ENCODE measurements at regions of chr1 and their contacts with region 1.

Region 1: GRCh38 chr1:197399755-197400527 is 131.9 kb downstream of the CRB1 start:
- DNase-seq: peak; percentile 50 to 52
- H3K4me3 ChIP-seq: no peak overlapping the region
- H3K4me3 Mint-ChIP-seq: no peak overlapping the region
- H3K27ac Mint-ChIP-seq: no peak overlapping the region
- H3K4me1 ChIP-seq: no peaks in the 10 kb centered on the region
- H3K4me1 Mint-ChIP-seq: no peaks in the 10 kb centered on the region
- H3K27me3 ChIP-seq: no peaks in the 10 kb centered on the region
- H3K27me3 Mint-ChIP-seq: peaks cover 7% of the 10 kb centered on the region
- CTCF ChIP-seq: peak; percentile 33 to 58

Region 2: GRCh38 chr1:197210426-197210825 is 189.5 kb before region 1 on chr1:
- CTCF ChIA-PET with region 1: no interaction called
- POLR2A ChIA-PET with region 1: no interaction called
- intact Hi-C with region 1: no loop called
- DNase-seq: no peak
- H3K4me3 ChIP-seq: no peak overlapping the region
- H3K4me3 Mint-ChIP-seq: no peak overlapping the region
- H3K27ac Mint-ChIP-seq: no peak overlapping the region
- H3K4me1 ChIP-seq: no peaks in the 10 kb centered on the region
- H3K4me1 Mint-ChIP-seq: no peaks in the 10 kb centered on the region
- H3K27me3 ChIP-seq: no peaks in the 10 kb centered on the region
- H3K27me3 Mint-ChIP-seq: peaks cover 7% of the 10 kb centered on the region
- CTCF ChIP-seq: no peak

Region 3: DNA sequence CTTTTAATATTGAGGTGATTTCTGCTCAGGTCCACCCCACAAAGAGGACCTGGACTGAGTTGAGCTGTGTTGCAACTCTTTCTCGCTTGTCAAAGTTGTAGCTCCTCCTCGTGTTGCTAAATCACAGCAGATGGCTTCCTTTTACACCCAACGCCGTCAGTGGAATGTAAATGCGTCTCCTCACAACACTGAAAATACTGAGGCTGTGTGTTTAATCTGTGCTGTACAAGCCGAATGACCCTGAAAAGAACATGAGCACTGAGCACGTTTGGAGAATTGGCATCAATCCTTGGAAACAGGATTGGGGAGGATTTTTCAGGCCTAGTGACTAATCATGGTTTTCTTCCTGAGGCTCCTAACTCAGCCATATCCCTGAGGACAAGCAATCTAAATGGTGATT is 64.1 kb after region 1 on chr1:
- CTCF ChIA-PET with region 1: interaction called, 11 read pairs
- POLR2A ChIA-PET with region 1: no interaction called
- intact Hi-C with region 1: no loop called
- DNase-seq: no peak
- H3K4me3 ChIP-seq: no peak overlapping the region
- H3K4me3 Mint-ChIP-seq: no peak overlapping the region
- H3K27ac Mint-ChIP-seq: no peak overlapping the region
- H3K4me1 ChIP-seq: no peaks in the 10 kb centered on the region
- H3K4me1 Mint-ChIP-seq: no peaks in the 10 kb centered on the region
- H3K27me3 ChIP-seq: no peaks in the 10 kb centered on the region
- H3K27me3 Mint-ChIP-seq: peaks cover 3% of the 10 kb centered on the region
- CTCF ChIP-seq: no peak

Measured in Caco-2 (cell line).